Mammary epithelial cell (primary cell): ENCODE measurements at regions of chr2 and their contacts with region 1.

Region 1: DNA sequence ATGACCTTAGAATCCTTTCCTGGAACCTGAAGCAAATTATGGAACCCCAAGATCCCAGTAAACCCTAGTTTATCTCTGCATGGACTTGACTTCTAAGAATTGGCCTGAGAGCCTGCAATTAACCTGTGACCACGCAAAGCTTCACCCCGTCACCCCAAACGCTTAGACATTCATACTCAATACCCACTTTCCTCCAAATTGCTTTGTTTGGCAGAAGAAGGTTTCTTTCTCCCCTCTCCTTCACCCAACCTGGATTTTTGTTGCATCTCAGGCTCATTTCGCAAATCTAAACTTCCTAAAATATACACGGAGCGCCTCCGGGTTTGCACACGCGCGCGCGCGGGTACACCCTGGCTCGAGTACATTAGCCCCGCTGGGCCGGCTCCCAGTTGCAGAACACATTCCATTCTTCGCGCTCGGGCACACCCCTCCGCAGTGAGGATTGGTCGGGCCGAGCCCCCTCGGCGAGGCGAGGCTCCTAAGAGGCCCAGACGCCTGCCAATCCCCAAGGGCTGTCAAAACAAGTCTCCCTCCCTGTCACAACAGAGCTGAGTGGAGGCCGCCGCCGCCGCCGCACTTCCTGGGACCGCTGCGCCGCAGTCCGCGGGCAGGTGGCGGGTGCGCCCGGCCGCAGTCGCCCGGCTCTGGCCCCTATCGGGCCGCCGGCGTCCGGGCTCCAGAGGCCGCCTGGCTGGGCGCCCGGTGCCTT is at the start of gene PLCL1:
- DNase-seq: peak; percentile 84
- H3K4me3 ChIP-seq: peak within 1 kb of the TSS; percentile 55 to 58 (median 58)
- H3K27ac ChIP-seq: no peak within 1 kb of the TSS
- H3K4me1 ChIP-seq: peaks cover 4% of the 10 kb centered on the region
- H3K27me3 ChIP-seq: peaks cover 16% of the 10 kb centered on the region
- CTCF ChIP-seq: no peak
- total RNA-seq, gene PLCL1: 0.33 TPM in 1 of 2 donors, not detected in the other

Region 2: DNA sequence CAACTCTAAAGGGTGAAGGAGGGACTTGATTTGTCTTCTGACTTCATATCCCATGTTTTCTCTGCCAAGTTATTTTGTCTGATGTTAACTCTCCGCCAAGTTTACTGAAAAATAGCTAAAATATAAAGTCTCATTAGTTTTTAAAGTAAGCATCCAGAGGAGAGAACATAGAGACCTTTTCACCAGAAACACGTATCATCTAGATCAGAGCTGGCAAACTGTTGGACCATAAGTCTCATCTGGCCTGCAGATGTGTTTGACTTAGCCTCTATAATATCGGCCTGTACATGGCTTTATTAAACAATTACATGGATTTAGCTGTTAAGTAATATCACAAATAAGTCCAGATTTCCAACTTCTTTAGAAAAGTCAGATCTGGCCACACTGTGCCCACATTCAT is 182.8 kb after region 1 on chr2:
- CTCF ChIA-PET with region 1: no interaction called
- dilution Hi-C with region 1: no loop called
- in situ Hi-C with region 1: no loop called
- intact Hi-C with region 1: loop called (anchors 5 kb)
- DNase-seq: no peak
- H3K4me3 ChIP-seq: no peak overlapping the region
- H3K27ac ChIP-seq: no peak overlapping the region
- H3K4me1 ChIP-seq: no peaks in the 10 kb centered on the region
- H3K27me3 ChIP-seq: no peaks in the 10 kb centered on the region
- CTCF ChIP-seq: no peak

Region 3: GRCh38 chr2:198053776-198054698 is 249.8 kb after region 1 on chr2:
- CTCF ChIA-PET with region 1: no interaction called
- dilution Hi-C with region 1: no loop called
- in situ Hi-C with region 1: no loop called
- intact Hi-C with region 1: loop called (anchors 1 kb)
- DNase-seq: peak; percentile 3
- H3K4me3 ChIP-seq: no peak overlapping the region
- H3K27ac ChIP-seq: no peak overlapping the region
- H3K4me1 ChIP-seq: no peaks in the 10 kb centered on the region
- H3K27me3 ChIP-seq: no peaks in the 10 kb centered on the region
- CTCF ChIP-seq: peak; percentile 46 to 58

Region 4: DNA sequence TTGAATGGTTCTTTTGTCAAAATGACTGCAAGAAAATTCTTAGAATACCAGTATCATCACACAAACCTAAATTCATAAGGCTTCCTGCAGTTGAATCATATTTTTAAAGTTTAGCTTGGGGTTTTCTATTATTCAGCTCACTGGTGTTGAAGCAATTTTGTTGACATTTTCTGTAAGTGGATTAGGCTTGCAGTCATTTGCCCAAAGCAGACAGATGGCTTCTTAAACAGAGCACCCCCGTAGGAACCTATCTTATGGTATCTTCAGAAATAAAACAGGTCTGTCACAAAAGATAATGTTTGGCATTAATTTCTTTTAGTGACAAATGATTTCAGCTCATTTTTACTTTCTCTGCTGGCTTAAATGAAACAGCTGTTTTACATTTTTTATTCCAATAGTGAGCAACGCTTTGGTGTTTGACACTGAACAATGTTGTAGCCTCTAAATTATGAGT is 331.3 kb after region 1 on chr2:
- CTCF ChIA-PET with region 1: no interaction called
- dilution Hi-C with region 1: no loop called
- in situ Hi-C with region 1: loop called in 1 of 2 experiments (anchors 10 kb)
- intact Hi-C with region 1: no loop called
- DNase-seq: no peak
- H3K4me3 ChIP-seq: no peak overlapping the region
- H3K27ac ChIP-seq: no peak overlapping the region
- H3K4me1 ChIP-seq: no peaks in the 10 kb centered on the region
- H3K27me3 ChIP-seq: peaks cover under 1% of the 10 kb centered on the region
- CTCF ChIP-seq: no peak

Region 5: GRCh38 chr2:198296665-198297308 is 492.6 kb after region 1 on chr2:
- CTCF ChIA-PET with region 1: interaction called, 4 read pairs
- dilution Hi-C with region 1: no loop called
- in situ Hi-C with region 1: loop called (anchors 10 to 25 kb)
- intact Hi-C with region 1: loop called (anchors 1 kb)
- DNase-seq: peak; percentile 26
- H3K4me3 ChIP-seq: no peak overlapping the region
- H3K27ac ChIP-seq: no peak overlapping the region
- H3K4me1 ChIP-seq: no peaks in the 10 kb centered on the region
- H3K27me3 ChIP-seq: peaks cover 2% of the 10 kb centered on the region
- CTCF ChIP-seq: peak; percentile 62 to 71